Common myeloid progenitor, CD34-positive (primary cell): ENCODE measurements at regions of chr16 and their contacts with region 1.

Region 1: GRCh38 chr16:66406534-66407221 is 20.4 kb upstream of the BEAN1 start:
- DNase-seq: peak; percentile 61 to 74 (median 72)
- H3K4me3 ChIP-seq: peak overlapping the region; percentile 1 to 78 (median 69)
- H3K27ac ChIP-seq: no peak overlapping the region
- H3K4me1 ChIP-seq: peaks cover 0 to 15% (median 12%) of the 10 kb centered on the region in 4 experiments
- H3K27me3 ChIP-seq: peaks cover 0 to 13% (median 4%) of the 10 kb centered on the region in 5 experiments

Region 2: DNA sequence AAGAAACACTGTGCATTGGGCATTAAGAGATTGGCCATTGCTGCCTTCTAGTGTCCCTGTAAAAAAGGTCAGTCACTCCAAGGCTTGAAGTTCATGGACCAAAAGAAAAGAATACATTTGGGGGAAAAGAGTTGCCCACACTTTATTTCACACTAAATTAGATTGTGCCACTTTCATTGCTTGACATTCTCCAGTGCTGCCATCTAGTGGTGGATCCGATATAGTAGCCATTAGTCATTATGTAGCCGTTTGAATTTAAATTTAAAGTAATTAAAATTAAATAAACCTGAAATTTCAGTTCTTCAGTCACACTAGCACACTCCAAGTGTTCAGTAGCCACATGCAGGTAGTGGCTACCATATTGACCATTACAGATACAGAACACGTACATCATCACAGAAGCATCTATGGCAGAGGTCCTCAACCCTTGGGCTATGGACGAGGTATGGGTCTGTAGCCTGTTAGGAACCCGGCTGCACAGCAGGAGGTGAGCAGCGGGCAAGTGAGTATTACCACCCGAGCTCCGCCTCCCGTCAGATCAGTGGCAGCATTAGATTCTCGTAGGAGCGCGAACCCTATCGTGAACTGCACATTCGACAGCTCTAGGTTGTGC is 62.0 kb before region 1 on chr16:
- CTCF ChIA-PET with region 1: no interaction called
- POLR2A ChIA-PET with region 1: no interaction called
- DNase-seq: peak; percentile 40 to 71 (median 65)
- H3K4me3 ChIP-seq: no peak overlapping the region
- H3K27ac ChIP-seq: no peak overlapping the region
- H3K4me1 ChIP-seq: no peaks in the 10 kb centered on the region
- H3K27me3 ChIP-seq: peaks cover 0 to 6% (median 0%) of the 10 kb centered on the region in 5 experiments

Region 3: DNA sequence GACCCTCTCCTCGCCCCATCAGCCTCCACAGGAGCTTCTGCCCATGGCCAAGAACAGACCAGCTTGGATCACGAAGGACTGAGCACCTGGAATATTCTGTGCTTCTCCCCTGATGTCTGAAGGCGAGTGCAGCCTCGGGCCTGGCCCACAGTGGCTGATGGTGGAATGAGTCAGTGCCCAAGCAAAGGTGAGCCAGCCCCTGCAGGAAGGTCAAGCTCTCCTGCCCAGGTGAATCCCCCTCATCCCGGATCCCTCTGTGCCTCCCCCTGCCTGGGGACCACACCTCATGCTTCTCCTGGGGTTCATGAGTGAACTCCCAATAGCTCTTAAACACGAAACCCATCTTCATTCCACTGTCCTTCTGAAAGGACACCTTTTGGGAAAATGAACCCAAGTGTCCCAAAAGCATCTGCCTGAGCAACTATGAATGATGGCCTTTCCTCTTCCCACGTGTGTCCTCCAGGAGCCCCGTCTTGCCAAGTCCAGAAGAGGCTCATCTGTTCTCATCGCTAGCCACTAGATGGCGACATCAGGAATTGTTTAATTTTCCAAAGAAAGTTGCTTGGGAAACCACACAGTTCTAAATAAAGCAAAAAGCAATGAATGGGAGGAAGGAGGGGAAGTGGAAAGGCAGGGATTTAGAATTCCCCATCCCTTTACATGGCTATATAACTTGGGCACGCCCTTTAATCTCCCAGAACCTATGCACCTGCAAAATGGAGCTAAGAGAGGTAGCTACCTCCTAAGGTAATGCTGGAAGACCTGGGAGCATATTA is 49.3 kb before region 1 on chr16:
- CTCF ChIA-PET with region 1: interaction called, 10 read pairs
- POLR2A ChIA-PET with region 1: no interaction called
- DNase-seq: peak; percentile 48 to 57 (median 49)
- H3K4me3 ChIP-seq: no peak overlapping the region
- H3K27ac ChIP-seq: no peak overlapping the region
- H3K4me1 ChIP-seq: peaks cover 0 to 37% (median 24%) of the 10 kb centered on the region in 4 experiments
- H3K27me3 ChIP-seq: peaks cover 0 to 3% (median 0%) of the 10 kb centered on the region in 5 experiments

Region 4: DNA sequence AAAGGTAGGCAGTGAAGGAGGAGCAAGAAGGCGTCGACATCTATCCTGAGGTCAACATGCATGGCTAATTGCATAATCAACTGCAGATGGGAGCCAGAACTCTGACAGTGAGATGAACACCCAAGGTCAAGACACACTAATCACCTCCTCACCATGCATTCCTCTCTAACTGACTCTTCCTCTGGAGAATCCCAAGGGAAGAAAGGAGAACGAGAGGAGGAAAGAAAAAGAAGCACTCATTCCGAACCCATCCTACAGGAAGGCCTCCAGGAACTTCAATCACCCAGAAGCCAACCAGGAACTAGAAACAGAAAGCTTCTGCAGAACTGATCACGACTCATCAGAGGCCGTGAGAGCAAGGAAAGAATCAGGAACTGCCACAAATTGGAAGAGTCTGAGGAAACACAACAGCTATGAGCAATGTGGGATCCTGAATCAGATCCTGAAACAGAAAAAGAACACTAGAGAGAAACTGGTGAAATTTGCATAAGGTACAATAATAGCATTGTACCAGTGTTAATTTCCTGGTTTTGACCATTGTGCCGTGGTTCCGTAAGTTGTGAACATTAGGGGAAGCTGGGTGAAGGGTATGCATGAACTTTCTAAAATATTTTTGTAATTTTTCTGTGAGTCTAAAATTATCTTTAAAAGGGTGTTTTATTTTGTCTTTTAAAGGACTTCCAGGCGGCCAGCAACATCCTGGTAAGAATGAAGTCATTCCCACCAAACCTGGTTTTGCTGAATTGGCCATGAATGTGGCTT is 10.4 kb after region 1 on chr16:
- CTCF ChIA-PET with region 1: interaction called, 14 read pairs
- POLR2A ChIA-PET with region 1: no interaction called
- DNase-seq: no peak
- H3K4me3 ChIP-seq: no peak overlapping the region
- H3K27ac ChIP-seq: no peak overlapping the region
- H3K4me1 ChIP-seq: no peaks in the 10 kb centered on the region
- H3K27me3 ChIP-seq: peaks cover 0 to 12% (median 4%) of the 10 kb centered on the region in 5 experiments

Region 5: GRCh38 chr16:66483689-66484481 is 77.2 kb after region 1 on chr16:
- CTCF ChIA-PET with region 1: interaction called, 92 read pairs
- POLR2A ChIA-PET with region 1: no interaction called
- DNase-seq: peak; percentile 69 to 82 (median 79)
- H3K4me3 ChIP-seq: no peak overlapping the region
- H3K27ac ChIP-seq: no peak overlapping the region
- H3K4me1 ChIP-seq: peaks cover 3 to 21% (median 14%) of the 10 kb centered on the region in 4 experiments
- H3K27me3 ChIP-seq: no peaks in the 10 kb centered on the region

Region 6: GRCh38 chr16:66608241-66609138 is 201.8 kb after region 1 on chr16:
- CTCF ChIA-PET with region 1: interaction called, 16 read pairs
- POLR2A ChIA-PET with region 1: no interaction called
- DNase-seq: peak; percentile 87 to 91 (median 91)
- H3K4me3 ChIP-seq: no peak overlapping the region
- H3K27ac ChIP-seq: peak overlapping the region in 1 of 2 experiments; percentile 59
- H3K4me1 ChIP-seq: peaks cover 0 to 44% (median 38%) of the 10 kb centered on the region in 4 experiments
- H3K27me3 ChIP-seq: no peaks in the 10 kb centered on the region

Region 7: DNA sequence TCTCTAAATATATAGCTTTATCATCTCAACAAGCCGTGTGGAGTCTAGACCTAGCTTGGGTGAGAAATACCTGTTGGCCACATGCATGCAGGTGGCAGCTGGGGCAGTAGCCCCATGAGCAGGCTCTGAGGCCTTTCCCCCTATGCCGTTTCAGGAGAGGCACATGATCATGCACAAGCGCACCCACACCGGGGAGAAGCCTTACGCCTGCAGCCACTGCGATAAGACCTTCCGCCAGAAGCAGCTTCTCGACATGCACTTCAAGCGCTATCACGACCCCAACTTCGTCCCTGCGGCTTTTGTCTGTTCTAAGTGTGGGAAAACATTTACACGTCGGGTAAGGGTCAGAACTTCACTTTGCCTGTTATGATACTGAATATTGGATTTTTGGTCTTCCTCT is 1221.5 kb after region 1 on chr16:
- CTCF ChIA-PET with region 1: no interaction called
- POLR2A ChIA-PET with region 1: no interaction called
- DNase-seq: no peak
- H3K4me3 ChIP-seq: no peak overlapping the region
- H3K27ac ChIP-seq: no peak overlapping the region
- H3K4me1 ChIP-seq: no peaks in the 10 kb centered on the region
- H3K27me3 ChIP-seq: no peaks in the 10 kb centered on the region